ENCODE measurements at regions of chr4 and their contacts with region 1.

Region 1: DNA sequence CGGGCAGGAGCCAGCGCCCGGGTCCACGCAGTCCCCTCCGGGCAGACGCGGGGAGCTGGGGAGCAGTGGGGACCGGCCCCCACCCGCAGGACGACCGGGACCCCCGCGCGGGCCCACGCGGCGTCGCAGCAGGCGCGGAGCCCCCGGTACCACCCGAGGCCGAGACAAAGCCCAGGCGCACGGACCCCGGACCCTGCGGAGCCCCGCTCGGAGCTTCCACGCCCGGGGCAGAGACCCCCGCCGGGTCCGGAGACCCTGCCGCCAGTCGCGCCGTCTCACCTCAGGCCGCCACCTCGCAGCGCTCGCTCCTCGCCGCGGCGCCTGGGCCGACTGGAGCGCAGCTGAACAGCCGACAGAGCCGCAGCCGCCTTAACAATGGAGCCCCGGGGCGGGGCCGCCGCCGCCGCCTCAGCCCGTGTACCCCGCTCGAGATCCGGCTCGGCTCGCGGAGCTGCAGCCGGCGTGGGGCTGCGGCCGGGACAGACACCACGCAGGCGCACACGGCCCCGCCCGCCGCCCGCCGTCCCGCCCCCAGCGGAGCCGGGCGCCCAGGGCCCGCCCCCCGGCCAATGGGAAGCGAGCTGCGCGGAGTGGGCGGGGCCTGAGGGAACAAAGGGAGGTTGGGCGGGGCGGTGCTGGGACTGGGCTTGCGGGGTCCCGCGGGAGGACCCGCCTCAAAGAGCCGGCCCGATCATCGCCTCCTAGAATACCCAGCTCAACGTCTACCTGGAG is at the start of gene AFAP1:
- DNase-seq: peak; percentile 79 to 92
- H3K4me3 ChIP-seq: peak within 1 kb of the TSS; percentile 80 to 100
- H3K27ac ChIP-seq: peak within 1 kb of the TSS; percentile 83 to 95
- H3K4me1 ChIP-seq: peaks cover 0 to 36% (median 20%) of the 10 kb centered on the region in 4 donors
- H3K27me3 ChIP-seq: no peaks in the 10 kb centered on the region
- CTCF ChIP-seq: no peak

Region 2: GRCh38 chr4:7823416-7823824 is 116.1 kb before region 1 on chr4:
- intact Hi-C with region 1: loop called (anchors 5 kb)
- DNase-seq: peak; percentile 75 to 88
- H3K4me3 ChIP-seq: peak overlapping the region in 1 of 2 donors; percentile 23
- H3K27ac ChIP-seq: peak overlapping the region; percentile 80 to 85
- H3K4me1 ChIP-seq: peaks cover 0 to 35% (median 19%) of the 10 kb centered on the region in 4 donors
- H3K27me3 ChIP-seq: no peaks in the 10 kb centered on the region
- CTCF ChIP-seq: no peak

Region 3: GRCh38 chr4:7890635-7891393 is 48.7 kb before region 1 on chr4:
- intact Hi-C with region 1: no loop called
- DNase-seq: no peak
- H3K4me3 ChIP-seq: no peak overlapping the region
- H3K27ac ChIP-seq: peak overlapping the region; percentile 11 to 47
- H3K4me1 ChIP-seq: peaks cover 0 to 56% (median 13%) of the 10 kb centered on the region in 4 donors
- H3K27me3 ChIP-seq: no peaks in the 10 kb centered on the region
- CTCF ChIP-seq: no peak